ENCODE measurements at regions of chr12 and their contacts with region 1.

Region 1: DNA sequence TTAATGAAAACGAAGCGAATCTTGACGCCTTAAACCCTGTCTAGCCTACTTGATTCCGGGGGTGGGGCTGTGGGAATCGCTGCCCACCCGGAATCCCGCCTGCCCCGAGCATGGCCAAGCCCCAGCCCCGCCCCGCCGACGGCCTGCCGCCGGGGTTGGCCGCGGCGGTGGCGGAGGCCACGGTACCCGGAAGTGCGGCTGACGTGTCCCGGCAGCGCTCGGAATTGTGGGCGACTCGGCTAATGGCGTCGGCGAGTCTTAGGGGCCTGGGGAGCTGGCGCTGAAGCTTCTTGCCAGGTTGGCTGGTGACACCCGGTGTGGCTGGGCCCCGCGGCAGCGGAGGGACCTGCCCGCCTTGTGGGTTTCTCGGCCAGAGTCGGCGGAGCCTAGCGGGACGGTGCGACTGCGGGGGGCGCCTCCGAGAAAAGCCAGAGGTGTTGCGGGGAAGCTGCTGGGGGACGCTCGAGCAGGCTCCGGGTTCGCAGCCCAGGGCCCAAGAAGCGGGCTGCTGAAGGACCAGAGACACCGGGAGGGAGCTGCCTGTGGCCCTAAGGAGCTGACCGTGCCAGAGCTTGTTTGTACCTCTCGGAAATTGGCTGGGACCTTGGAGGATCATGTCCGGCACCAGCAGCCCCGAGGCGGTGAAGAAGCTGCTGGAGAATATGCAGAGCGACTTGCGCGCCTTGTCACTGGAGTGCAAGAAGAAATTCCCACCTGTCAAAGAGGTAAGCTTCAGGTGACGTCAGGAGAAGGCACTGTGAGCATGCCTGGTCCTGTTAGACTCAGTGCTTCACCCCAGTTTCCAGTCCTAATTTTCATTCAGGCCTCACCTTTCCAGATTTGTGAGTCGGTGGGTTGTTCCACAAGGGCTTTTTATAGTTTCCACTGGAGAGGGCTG is at the start of gene MON2:
- DNase-seq: peak; percentile 68 to 94 (median 82)
- ATAC-seq: peak; percentile 94
- H3K4me3 ChIP-seq: peak within 1 kb of the TSS; percentile 72
- H3K4me3 Mint-ChIP-seq: peak within 1 kb of the TSS; percentile 90
- H3K27ac ChIP-seq: peak within 1 kb of the TSS; percentile 82 to 85
- H3K27ac Mint-ChIP-seq: peak within 1 kb of the TSS; percentile 90
- H3K4me1 ChIP-seq: peaks cover 23% of the 10 kb centered on the region
- H3K4me1 Mint-ChIP-seq: peaks cover 31% of the 10 kb centered on the region
- H3K27me3 ChIP-seq: no peaks in the 10 kb centered on the region
- H3K27me3 Mint-ChIP-seq: no peaks in the 10 kb centered on the region
- CTCF ChIP-seq: no peak
- total RNA-seq, gene MON2: 51.8 to 52.6 TPM

Region 2: GRCh38 chr12:60752589-60752988 is 1714.3 kb before region 1 on chr12:
- CTCF ChIA-PET with region 1: no interaction called
- POLR2A ChIA-PET with region 1: no interaction called
- intact Hi-C with region 1: no loop called
- DNase-seq: no peak
- ATAC-seq: no peak
- H3K4me3 ChIP-seq: no peak overlapping the region
- H3K4me3 Mint-ChIP-seq: no peak overlapping the region
- H3K27ac ChIP-seq: no peak overlapping the region
- H3K27ac Mint-ChIP-seq: no peak overlapping the region
- H3K4me1 ChIP-seq: no peaks in the 10 kb centered on the region
- H3K4me1 Mint-ChIP-seq: no peaks in the 10 kb centered on the region
- H3K27me3 ChIP-seq: no peaks in the 10 kb centered on the region
- H3K27me3 Mint-ChIP-seq: no peaks in the 10 kb centered on the region
- CTCF ChIP-seq: no peak

Region 3: GRCh38 chr12:61860451-61860850 is 606.4 kb before region 1 on chr12:
- CTCF ChIA-PET with region 1: no interaction called
- POLR2A ChIA-PET with region 1: no interaction called
- intact Hi-C with region 1: no loop called
- DNase-seq: no peak
- ATAC-seq: no peak
- H3K4me3 ChIP-seq: no peak overlapping the region
- H3K4me3 Mint-ChIP-seq: no peak overlapping the region
- H3K27ac ChIP-seq: no peak overlapping the region
- H3K27ac Mint-ChIP-seq: no peak overlapping the region
- H3K4me1 ChIP-seq: no peaks in the 10 kb centered on the region
- H3K4me1 Mint-ChIP-seq: no peaks in the 10 kb centered on the region
- H3K27me3 ChIP-seq: no peaks in the 10 kb centered on the region
- H3K27me3 Mint-ChIP-seq: no peaks in the 10 kb centered on the region
- CTCF ChIP-seq: no peak

Region 4: GRCh38 chr12:62259993-62260732 is 206.7 kb before region 1 on chr12 and contains the start of gene USP15:
- CTCF ChIA-PET with region 1: no interaction called
- POLR2A ChIA-PET with region 1: interaction called, 18 read pairs
- intact Hi-C with region 1: loop called (anchors 5 to 10 kb)
- DNase-seq: peak; percentile 93 to 97 (median 95)
- ATAC-seq: peak; percentile 78
- H3K4me3 ChIP-seq: peak within 1 kb of the TSS; percentile 81
- H3K4me3 Mint-ChIP-seq: peak within 1 kb of the TSS; percentile 98
- H3K27ac ChIP-seq: peak within 1 kb of the TSS; percentile 97
- H3K27ac Mint-ChIP-seq: peak within 1 kb of the TSS; percentile 98
- H3K4me1 ChIP-seq: peaks cover 13% of the 10 kb centered on the region
- H3K4me1 Mint-ChIP-seq: peaks cover 77% of the 10 kb centered on the region
- H3K27me3 ChIP-seq: no peaks in the 10 kb centered on the region
- H3K27me3 Mint-ChIP-seq: no peaks in the 10 kb centered on the region
- CTCF ChIP-seq: peak; percentile 62
- total RNA-seq, gene USP15: 212 to 218 TPM

Region 5: DNA sequence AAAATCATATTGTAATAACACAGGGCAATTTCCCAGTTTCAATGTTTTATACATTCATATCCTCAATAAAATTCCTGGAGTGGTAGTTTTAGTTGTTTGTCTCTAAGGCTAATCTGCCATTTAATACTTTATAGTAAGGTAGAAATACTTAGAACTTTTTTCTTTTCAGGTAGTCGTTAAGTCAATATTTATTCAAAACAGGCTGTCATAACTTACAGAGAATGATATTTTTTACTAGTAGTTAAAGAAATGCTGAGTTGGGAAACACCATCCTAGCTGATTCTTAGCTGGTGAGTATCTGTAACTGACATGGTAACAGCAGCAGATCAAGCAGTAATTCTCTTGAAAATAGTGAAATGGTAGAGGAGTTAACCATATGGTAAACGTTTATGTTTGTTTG is 33.2 kb after region 1 on chr12:
- CTCF ChIA-PET with region 1: no interaction called
- POLR2A ChIA-PET with region 1: no interaction called
- intact Hi-C with region 1: loop called in 1 of 2 experiments (anchors 5 kb)
- DNase-seq: no peak
- ATAC-seq: no peak
- H3K4me3 ChIP-seq: no peak overlapping the region
- H3K4me3 Mint-ChIP-seq: no peak overlapping the region
- H3K27ac ChIP-seq: no peak overlapping the region
- H3K27ac Mint-ChIP-seq: no peak overlapping the region
- H3K4me1 ChIP-seq: no peaks in the 10 kb centered on the region
- H3K4me1 Mint-ChIP-seq: no peaks in the 10 kb centered on the region
- H3K27me3 ChIP-seq: no peaks in the 10 kb centered on the region
- H3K27me3 Mint-ChIP-seq: no peaks in the 10 kb centered on the region
- CTCF ChIP-seq: no peak

Region 6: GRCh38 chr12:62522984-62523383 is 56.1 kb after region 1 on chr12:
- CTCF ChIA-PET with region 1: no interaction called
- POLR2A ChIA-PET with region 1: interaction called, 3 read pairs
- intact Hi-C with region 1: loop called in 1 of 2 experiments (anchors 10 kb)
- DNase-seq: peak in 1 of 14 experiments; percentile 15
- ATAC-seq: peak; percentile 44
- H3K4me3 ChIP-seq: no peak overlapping the region
- H3K4me3 Mint-ChIP-seq: no peak overlapping the region
- H3K27ac ChIP-seq: no peak overlapping the region
- H3K27ac Mint-ChIP-seq: no peak overlapping the region
- H3K4me1 ChIP-seq: no peaks in the 10 kb centered on the region
- H3K4me1 Mint-ChIP-seq: peaks cover 57% of the 10 kb centered on the region
- H3K27me3 ChIP-seq: no peaks in the 10 kb centered on the region
- H3K27me3 Mint-ChIP-seq: no peaks in the 10 kb centered on the region
- CTCF ChIP-seq: no peak

Region 7: GRCh38 chr12:62575036-62575435 is 108.2 kb after region 1 on chr12:
- CTCF ChIA-PET with region 1: no interaction called
- POLR2A ChIA-PET with region 1: no interaction called
- intact Hi-C with region 1: no loop called
- DNase-seq: no peak
- ATAC-seq: no peak
- H3K4me3 ChIP-seq: no peak overlapping the region
- H3K4me3 Mint-ChIP-seq: no peak overlapping the region
- H3K27ac ChIP-seq: no peak overlapping the region
- H3K27ac Mint-ChIP-seq: no peak overlapping the region
- H3K4me1 ChIP-seq: no peaks in the 10 kb centered on the region
- H3K4me1 Mint-ChIP-seq: no peaks in the 10 kb centered on the region
- H3K27me3 ChIP-seq: no peaks in the 10 kb centered on the region
- H3K27me3 Mint-ChIP-seq: no peaks in the 10 kb centered on the region
- CTCF ChIP-seq: no peak